ENCODE measurements at regions of chr1 and their contacts with region 1.

Region 1: GRCh38 chr1:53442299-53442698 is 16.9 kb upstream of the DMRTB1 start:
- DNase-seq: no peak
- H3K4me3 ChIP-seq: no peak overlapping the region
- H3K27ac ChIP-seq: no peak overlapping the region
- H3K4me1 ChIP-seq: no peaks in the 10 kb centered on the region
- H3K27me3 ChIP-seq: no peaks in the 10 kb centered on the region
- CTCF ChIP-seq: no peak

Region 2: DNA sequence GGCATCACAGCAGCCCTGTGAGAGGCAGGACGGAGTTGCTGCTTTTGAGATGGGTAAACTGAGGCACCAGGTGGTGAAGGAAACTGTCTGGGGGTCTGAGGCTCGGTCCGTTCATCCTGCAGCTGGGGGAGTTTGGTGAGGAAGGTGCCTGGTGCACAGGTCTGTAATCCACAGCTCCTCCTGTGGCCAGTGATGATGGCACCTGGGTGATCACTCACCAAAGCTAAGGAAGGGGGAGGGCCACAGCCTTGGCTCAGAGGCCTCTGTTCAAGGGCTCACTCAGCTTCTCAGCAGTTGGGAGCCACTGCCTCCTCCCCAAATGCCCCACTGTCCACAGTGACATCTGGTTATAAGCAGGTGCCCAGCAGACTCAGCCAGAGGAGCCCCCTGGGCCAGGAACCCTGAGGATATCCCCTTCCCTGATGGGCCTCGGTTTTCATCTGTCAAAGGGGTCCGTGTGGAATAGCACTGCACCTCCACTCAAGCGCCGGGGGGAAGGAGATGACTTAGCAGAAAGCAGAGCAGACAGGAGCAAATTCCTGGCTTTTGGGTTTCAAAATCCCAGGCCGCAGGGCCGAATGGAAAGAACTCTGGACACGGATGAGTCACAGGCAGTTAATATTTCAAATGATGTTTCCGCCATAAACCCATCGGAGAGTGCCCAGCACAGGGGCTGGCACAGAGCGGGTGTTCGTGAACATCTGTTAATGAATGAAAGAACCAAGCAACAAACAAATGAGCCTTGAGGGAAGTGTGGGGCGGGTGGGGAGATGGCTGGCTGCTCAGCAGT is 99.7 kb after region 1 on chr1:
- CTCF ChIA-PET with region 1: no interaction called
- POLR2A ChIA-PET with region 1: no interaction called
- intact Hi-C with region 1: no loop called
- DNase-seq: peak; percentile 68 to 89
- H3K4me3 ChIP-seq: peak overlapping the region; percentile 33; the same call in 1 of the 2 replicates
- H3K27ac ChIP-seq: peak overlapping the region; percentile 97
- H3K4me1 ChIP-seq: peaks cover 39% of the 10 kb centered on the region
- H3K27me3 ChIP-seq: no peaks in the 10 kb centered on the region
- CTCF ChIP-seq: peak; percentile 78

Region 3: GRCh38 chr1:53860967-53861411 is 418.7 kb after region 1 on chr1:
- CTCF ChIA-PET with region 1: interaction called, 19 read pairs
- POLR2A ChIA-PET with region 1: no interaction called
- intact Hi-C with region 1: no loop called
- DNase-seq: peak; percentile 47 to 50
- H3K4me3 ChIP-seq: no peak overlapping the region
- H3K27ac ChIP-seq: no peak overlapping the region
- H3K4me1 ChIP-seq: no peaks in the 10 kb centered on the region
- H3K27me3 ChIP-seq: no peaks in the 10 kb centered on the region
- CTCF ChIP-seq: peak; percentile 80

Region 4: DNA sequence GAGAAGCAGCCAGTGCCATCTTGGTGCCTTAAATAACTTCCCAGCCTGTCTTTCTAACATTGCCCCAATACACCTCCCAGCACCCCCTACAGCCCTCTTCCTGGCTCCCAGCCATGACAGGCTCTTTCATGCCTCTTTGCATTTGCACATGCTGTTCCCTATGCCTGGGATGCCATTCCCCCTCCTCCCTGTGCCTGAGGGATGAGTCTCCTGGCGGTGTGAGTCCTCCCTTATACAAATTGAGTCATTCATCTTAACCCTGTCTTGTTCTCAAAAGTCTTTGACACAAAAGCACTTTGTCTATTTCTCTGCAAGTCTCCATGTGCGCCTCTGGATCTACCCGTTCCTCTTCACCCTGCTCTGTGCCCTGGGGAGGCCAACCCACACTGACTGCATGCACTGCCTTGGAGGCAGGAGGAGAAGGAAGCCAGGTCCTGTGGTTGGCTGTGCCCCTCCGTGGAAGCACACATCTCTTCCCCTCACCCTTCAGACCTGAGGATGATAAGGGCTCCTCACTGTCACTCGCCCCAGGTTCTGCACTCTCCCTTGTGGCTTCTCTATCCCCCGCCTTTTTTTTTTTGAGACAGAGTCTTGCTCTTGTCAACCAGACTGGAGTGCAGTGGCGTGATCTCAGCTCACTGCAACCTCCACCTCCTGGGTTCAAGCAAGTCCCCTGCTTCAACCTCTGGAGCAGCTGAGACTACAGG is 685.4 kb after region 1 on chr1:
- CTCF ChIA-PET with region 1: interaction called, 14 read pairs
- POLR2A ChIA-PET with region 1: no interaction called
- intact Hi-C with region 1: no loop called
- DNase-seq: no peak
- H3K4me3 ChIP-seq: no peak overlapping the region
- H3K27ac ChIP-seq: no peak overlapping the region
- H3K4me1 ChIP-seq: no peaks in the 10 kb centered on the region
- H3K27me3 ChIP-seq: no peaks in the 10 kb centered on the region; the same call in none of the 2 replicates
- CTCF ChIP-seq: no peak

Measured in PC-9 (cell line).